Activated CD8-positive, alpha-beta T cell treated with anti-CD3 and anti-CD28 coated beads for 36 hours (primary cell): ENCODE measurements at regions of chr2 and their contacts with region 1.

Region 1: GRCh38 chr2:165214093-165214492 is 10.2 kb upstream of the SCN3A start:
- DNase-seq: no peak
- ATAC-seq: no peak
- H3K4me3 Mint-ChIP-seq: no peak overlapping the region
- H3K27ac Mint-ChIP-seq: no peak overlapping the region
- H3K4me1 Mint-ChIP-seq: no peaks in the 10 kb centered on the region
- H3K27me3 Mint-ChIP-seq: no peaks in the 10 kb centered on the region
- CTCF ChIP-seq: no peak

Region 2: GRCh38 chr2:165203689-165204559 is 10.2 kb before region 1 on chr2 and contains the start of gene SCN3A:
- CTCF ChIA-PET with region 1: interaction called, 11 read pairs
- POLR2A ChIA-PET with region 1: no interaction called
- intact Hi-C with region 1: no loop called
- DNase-seq: peak; percentile 19
- ATAC-seq: no peak
- H3K4me3 Mint-ChIP-seq: no peak within 1 kb of the TSS
- H3K27ac Mint-ChIP-seq: no peak within 1 kb of the TSS
- H3K4me1 Mint-ChIP-seq: no peaks in the 10 kb centered on the region
- H3K27me3 Mint-ChIP-seq: no peaks in the 10 kb centered on the region
- CTCF ChIP-seq: peak; percentile 77
- total RNA-seq, gene SCN3A: 0.07 TPM in 1 of 2 experiments, not detected in the other

Region 3: GRCh38 chr2:165239230-165239629 is 25.1 kb after region 1 on chr2 and contains the start of gene SCN2A:
- CTCF ChIA-PET with region 1: no interaction called
- POLR2A ChIA-PET with region 1: no interaction called
- intact Hi-C with region 1: no loop called
- DNase-seq: no peak
- ATAC-seq: no peak
- H3K4me3 Mint-ChIP-seq: no peak within 1 kb of the TSS
- H3K27ac Mint-ChIP-seq: no peak within 1 kb of the TSS
- H3K4me1 Mint-ChIP-seq: no peaks in the 10 kb centered on the region
- H3K27me3 Mint-ChIP-seq: no peaks in the 10 kb centered on the region
- CTCF ChIP-seq: peak; percentile 67
- total RNA-seq, gene SCN2A: not detected